MCF 10A (cell line): ENCODE measurements at regions of chr3 and their contacts with region 1.

Region 1: DNA sequence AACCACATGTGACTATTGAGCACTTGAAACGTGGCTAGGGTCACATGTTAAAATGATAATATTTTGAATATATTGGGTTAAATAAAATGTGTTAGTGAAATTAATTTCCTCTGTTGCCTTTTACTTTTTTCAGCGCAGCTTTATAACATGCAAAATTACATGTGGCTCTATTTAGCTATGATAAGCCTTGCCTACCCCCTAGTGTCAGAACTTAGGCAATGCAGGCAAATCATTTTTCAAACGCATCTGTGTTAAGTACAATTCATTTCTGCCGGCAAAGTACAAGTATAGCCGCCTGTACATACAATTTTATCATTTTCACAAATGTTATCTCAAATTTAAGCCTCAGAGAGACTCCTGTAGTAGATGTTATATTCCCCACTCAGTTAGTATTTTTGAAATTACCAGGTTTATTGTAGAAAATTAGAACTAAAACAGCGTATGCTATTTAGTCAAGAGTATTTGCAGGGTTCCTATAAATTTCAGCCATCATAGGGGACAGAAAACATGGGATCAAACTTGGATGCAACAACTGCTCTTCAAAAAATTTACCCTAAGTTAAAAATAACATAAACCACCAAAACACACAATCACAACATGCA is 56.1 kb downstream of the TAFA4 start:
- DNase-seq: peak; percentile 74
- H3K4me3 Mint-ChIP-seq: no peak overlapping the region
- H3K27ac Mint-ChIP-seq: no peak overlapping the region
- H3K4me1 Mint-ChIP-seq: no peaks in the 10 kb centered on the region
- H3K27me3 Mint-ChIP-seq: peaks cover 76% of the 10 kb centered on the region
- CTCF ChIP-seq: peak; percentile 77

Region 2: DNA sequence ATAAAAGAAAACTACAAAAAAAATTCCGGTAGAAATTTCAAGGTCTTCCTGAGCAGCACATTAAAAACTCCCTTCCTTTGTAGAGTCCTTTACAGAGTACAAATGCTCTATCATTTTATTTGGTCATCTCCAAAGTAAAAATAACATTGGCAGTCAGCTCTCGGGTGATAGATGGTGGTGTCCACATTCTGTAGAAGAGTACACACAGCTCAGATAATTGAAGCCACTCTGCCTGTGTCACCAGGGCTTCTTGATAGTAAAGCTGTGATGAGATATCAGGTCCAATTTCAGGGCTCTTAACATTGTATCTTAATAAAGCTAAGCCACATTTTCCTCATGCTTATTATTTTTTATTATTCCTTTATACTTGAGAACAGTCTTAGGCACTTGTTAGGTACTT is 315.5 kb before region 1 on chr3:
- CTCF ChIA-PET with region 1: no interaction called
- POLR2A ChIA-PET with region 1: no interaction called
- intact Hi-C with region 1: loop called (anchors 10 kb)
- DNase-seq: no peak
- H3K4me3 Mint-ChIP-seq: no peak overlapping the region
- H3K27ac Mint-ChIP-seq: no peak overlapping the region
- H3K4me1 Mint-ChIP-seq: no peaks in the 10 kb centered on the region
- H3K27me3 Mint-ChIP-seq: peaks cover 76% of the 10 kb centered on the region
- CTCF ChIP-seq: no peak

Region 3: GRCh38 chr3:68866157-68866556 is 10.1 kb before region 1 on chr3:
- CTCF ChIA-PET with region 1: interaction called, 29 read pairs
- POLR2A ChIA-PET with region 1: no interaction called
- intact Hi-C with region 1: no loop called
- DNase-seq: peak; percentile 4
- H3K4me3 Mint-ChIP-seq: no peak overlapping the region
- H3K27ac Mint-ChIP-seq: no peak overlapping the region
- H3K4me1 Mint-ChIP-seq: no peaks in the 10 kb centered on the region
- H3K27me3 Mint-ChIP-seq: peaks cover 87% of the 10 kb centered on the region
- CTCF ChIP-seq: peak; percentile 18

Region 4: GRCh38 chr3:68919000-68919399 is 42.8 kb after region 1 on chr3:
- CTCF ChIA-PET with region 1: no interaction called
- POLR2A ChIA-PET with region 1: no interaction called
- intact Hi-C with region 1: no loop called
- DNase-seq: peak; percentile 30
- H3K4me3 Mint-ChIP-seq: no peak overlapping the region
- H3K27ac Mint-ChIP-seq: no peak overlapping the region
- H3K4me1 Mint-ChIP-seq: no peaks in the 10 kb centered on the region
- H3K27me3 Mint-ChIP-seq: peaks cover 92% of the 10 kb centered on the region
- CTCF ChIP-seq: no peak